ENCODE measurements at regions of chr11 and their contacts with region 1.

Region 1: DNA sequence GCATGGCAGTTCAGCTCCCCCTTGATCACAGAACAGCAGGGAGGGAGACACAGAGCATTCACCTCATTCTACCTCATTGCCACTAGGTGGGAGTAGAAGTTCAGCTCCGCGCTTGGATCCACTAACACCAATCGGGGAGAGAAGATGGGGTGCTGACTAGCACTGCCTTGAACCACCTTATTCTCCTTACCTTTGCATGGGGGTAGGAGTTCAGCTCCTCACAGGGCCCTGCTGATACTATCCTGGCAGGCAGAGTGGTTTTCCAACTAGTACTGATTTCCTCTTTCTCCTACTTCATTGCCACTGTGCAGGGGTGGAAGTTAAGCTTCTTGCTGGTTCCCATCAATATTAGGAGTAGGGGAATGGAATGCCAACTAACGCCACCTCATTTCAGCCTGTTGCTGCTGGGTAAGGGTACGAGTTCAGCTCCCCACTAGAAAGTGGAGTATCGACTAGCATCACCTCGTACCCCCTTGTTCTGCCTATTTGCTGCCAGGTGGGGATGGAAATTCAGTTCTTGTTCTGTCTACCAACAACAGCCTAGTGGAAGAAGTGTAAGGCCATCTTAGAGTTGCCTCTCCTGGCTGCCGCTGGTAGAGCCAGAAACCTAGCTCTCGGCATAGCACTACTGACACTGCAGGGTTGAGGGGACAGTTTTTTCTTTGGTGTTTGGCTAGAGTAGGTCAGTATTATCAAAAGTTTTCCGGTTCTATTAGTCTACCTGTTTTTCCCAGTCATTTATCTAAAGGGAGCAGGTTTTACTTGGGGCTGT is 550.9 kb upstream of the CCDC90B start:
- DNase-seq: peak; percentile 28
- H3K4me3 ChIP-seq: no peak overlapping the region
- CTCF ChIP-seq: peak; percentile 89

Region 2: GRCh38 chr11:83187465-83187864 is 649.6 kb before region 1 on chr11:
- in situ Hi-C with region 1: no loop called
- DNase-seq: no peak
- H3K4me3 ChIP-seq: no peak overlapping the region
- CTCF ChIP-seq: no peak

Region 3: DNA sequence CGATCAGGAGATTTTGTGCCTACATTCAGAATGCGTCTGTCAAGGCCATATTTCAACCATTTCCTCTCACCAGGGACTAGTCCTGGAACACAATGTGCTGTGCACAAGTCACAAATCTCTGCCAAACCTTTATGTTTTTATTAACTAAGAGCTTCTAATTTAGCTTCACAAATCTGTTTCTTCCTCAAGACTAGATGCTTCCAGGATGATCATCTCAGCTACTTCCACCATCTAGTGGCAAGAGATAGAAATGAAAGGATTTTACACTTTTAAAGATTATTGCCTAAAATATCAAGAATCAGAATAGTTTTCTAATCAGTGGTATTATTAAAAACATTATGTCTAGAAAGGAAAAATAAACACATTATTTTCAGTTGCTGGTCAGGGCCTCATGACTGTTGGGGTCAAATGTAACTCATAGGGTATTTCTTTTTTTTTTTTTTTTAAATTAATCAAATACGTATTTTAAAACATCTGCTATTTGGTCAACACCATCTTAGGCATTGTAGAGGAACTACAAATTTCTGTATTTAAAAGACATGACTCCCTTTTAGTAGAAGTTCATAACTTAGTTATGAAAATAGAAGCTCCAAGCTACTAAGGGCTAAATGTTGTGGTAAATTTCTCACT is 687.5 kb after region 1 on chr11:
- in situ Hi-C with region 1: loop called (anchors 25 kb)
- DNase-seq: peak; percentile 4
- H3K4me3 ChIP-seq: no peak overlapping the region
- CTCF ChIP-seq: peak; percentile 59

Measured in astrocyte of the cerebellum (primary cell).